ENCODE measurements at regions of chr9 and their contacts with region 1.

Region 1: DNA sequence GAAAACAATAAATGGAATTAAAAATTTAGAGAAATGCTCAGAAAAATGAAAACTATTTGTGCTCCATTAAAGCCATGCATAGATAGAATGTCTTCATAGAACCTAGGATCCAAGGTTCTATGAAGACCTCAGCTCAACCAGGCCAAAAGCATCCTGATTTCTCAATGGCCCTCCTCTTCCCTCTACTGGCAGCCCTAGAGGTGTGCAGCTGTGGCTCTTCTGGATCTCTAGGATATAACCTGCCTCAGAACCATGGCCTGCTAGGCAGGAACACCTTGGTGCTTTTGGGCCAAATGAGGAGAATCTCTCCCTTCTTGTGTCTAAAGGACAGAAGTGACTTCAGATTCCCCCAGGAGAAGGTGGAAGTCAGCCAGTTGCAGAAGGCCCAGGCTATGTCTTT is 15.1 kb downstream of the IFNA1 start:
- DNase-seq: peak; percentile 44
- H3K4me3 Mint-ChIP-seq: no peak overlapping the region
- H3K27ac Mint-ChIP-seq: no peak overlapping the region
- H3K4me1 Mint-ChIP-seq: no peaks in the 10 kb centered on the region
- H3K27me3 Mint-ChIP-seq: peaks cover 25% of the 10 kb centered on the region

Region 2: GRCh38 chr9:21239911-21240310 is 215.4 kb before region 1 on chr9 and contains the start of gene IFNA14:
- CTCF ChIA-PET with region 1: interaction called, 13 read pairs
- DNase-seq: no peak
- H3K4me3 Mint-ChIP-seq: no peak within 1 kb of the TSS
- H3K27ac Mint-ChIP-seq: no peak within 1 kb of the TSS
- H3K4me1 Mint-ChIP-seq: peaks cover 11% of the 10 kb centered on the region
- H3K27me3 Mint-ChIP-seq: peaks cover 33% of the 10 kb centered on the region

Region 3: GRCh38 chr9:21317956-21318923 is 137.1 kb before region 1 on chr9:
- CTCF ChIA-PET with region 1: interaction called, 20 read pairs
- DNase-seq: peak; percentile 43
- H3K4me3 Mint-ChIP-seq: no peak overlapping the region
- H3K27ac Mint-ChIP-seq: no peak overlapping the region
- H3K4me1 Mint-ChIP-seq: peaks cover 2% of the 10 kb centered on the region
- H3K27me3 Mint-ChIP-seq: no peaks in the 10 kb centered on the region

Region 4: GRCh38 chr9:21326526-21327139 is 128.7 kb before region 1 on chr9:
- CTCF ChIA-PET with region 1: interaction called, 18 read pairs
- DNase-seq: no peak
- H3K4me3 Mint-ChIP-seq: no peak overlapping the region
- H3K27ac Mint-ChIP-seq: no peak overlapping the region
- H3K4me1 Mint-ChIP-seq: peaks cover 30% of the 10 kb centered on the region
- H3K27me3 Mint-ChIP-seq: no peaks in the 10 kb centered on the region

Region 5: GRCh38 chr9:21434202-21435014 is 20.9 kb before region 1 on chr9:
- CTCF ChIA-PET with region 1: interaction called, 32 read pairs
- DNase-seq: peak; percentile 70
- H3K4me3 Mint-ChIP-seq: no peak overlapping the region
- H3K27ac Mint-ChIP-seq: no peak overlapping the region
- H3K4me1 Mint-ChIP-seq: no peaks in the 10 kb centered on the region
- H3K27me3 Mint-ChIP-seq: peaks cover 41% of the 10 kb centered on the region

Region 6: DNA sequence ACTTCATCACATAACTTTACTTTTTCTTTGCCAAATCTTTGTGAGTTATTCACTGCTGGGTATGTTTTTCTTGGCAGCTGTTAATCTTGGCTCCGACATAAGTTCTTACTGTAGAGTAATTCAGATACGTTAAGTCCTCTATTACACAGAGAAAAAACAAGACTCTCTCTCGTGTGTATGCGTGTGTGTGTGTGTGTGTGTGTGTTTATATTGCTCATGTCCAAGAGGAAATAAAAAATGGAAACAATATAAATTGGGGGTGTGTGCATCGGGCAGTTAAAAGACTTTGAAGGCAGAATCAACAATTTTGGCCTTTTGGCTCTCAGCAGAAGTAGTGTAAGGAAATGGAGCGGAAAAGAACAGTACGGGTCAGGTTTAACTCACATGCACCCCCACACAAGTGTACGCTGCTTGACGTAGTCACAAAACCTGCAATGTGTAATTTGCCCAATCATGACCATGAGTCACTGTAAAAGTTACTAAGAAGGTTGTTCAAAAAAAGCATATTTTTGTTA is 94.0 kb after region 1 on chr9:
- CTCF ChIA-PET with region 1: no interaction called
- DNase-seq: no peak
- H3K4me3 Mint-ChIP-seq: no peak overlapping the region
- H3K27ac Mint-ChIP-seq: no peak overlapping the region
- H3K4me1 Mint-ChIP-seq: peaks cover 16% of the 10 kb centered on the region
- H3K27me3 Mint-ChIP-seq: no peaks in the 10 kb centered on the region